HEK293 (cell line): ENCODE measurements at regions of chr11 and their contacts with region 1.

Region 1: DNA sequence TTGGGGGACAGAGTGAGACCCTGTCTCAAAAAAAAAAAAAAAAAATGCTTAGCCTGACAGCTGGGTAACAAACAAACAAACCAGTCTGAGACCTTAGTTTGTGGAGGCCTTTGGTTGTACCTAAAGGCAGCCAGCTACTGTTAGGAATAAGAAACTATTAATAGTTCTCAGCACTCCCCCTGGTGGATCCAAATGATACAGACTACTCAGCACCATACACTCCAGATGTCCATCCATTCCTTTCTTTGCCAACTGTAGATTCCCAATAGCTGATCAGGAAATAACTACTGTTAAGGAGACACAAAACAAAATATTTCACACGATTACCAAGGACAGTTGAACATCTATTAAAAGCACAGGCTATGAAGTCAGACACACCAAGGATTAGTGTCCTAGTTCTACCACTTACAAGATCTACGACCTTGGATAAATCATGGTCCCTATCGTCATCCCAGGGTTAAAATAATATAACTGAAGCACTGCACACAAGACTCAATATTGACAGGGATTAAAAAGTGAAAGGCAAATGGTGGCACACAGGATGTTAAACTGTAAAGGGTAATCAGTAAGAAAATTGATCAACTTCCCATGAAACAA is 17.2 kb downstream of the CLDN25 start:
- H3K4me3 ChIP-seq: no peak overlapping the region
- H3K27ac ChIP-seq: no peak overlapping the region
- H3K4me1 ChIP-seq: no peaks in the 10 kb centered on the region
- CTCF ChIP-seq: no peak

Region 2: DNA sequence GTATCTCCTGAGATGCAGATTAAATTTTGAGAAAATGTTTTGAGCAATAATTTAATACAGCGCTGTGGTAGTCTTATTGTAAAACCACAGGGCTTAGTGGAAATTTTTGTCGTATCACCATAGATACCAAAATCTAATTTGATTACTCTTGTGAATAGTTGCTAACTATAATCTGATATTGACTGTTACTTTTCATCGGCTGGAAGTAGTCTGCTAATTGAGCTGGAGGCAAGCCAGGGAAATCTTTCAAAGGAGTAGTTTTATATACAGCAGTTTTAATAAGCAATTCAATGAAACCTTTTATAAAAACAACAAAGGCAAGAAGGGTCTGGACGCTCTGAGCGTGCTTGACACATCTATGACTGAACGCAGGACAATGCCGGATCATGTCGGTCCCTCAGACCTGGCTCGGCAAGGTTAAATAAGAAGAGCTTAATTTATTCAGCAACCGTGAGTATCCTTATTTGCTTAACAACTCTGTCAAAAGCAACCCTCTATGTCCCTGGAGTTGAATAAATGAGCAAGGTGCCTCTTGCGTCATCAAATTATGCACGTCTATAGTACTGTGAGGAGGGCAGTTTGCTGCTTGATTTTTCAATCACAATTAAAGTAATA is 714.3 kb before region 1 on chr11:
- CTCF ChIA-PET with region 1: no interaction called
- POLR2A ChIA-PET with region 1: no interaction called
- H3K4me3 ChIP-seq: no peak overlapping the region
- H3K27ac ChIP-seq: no peak overlapping the region
- H3K4me1 ChIP-seq: peaks cover 2% of the 10 kb centered on the region; the same call in 1 of the 2 replicates
- CTCF ChIP-seq: no peak

Region 3: GRCh38 chr11:113613619-113614018 is 183.1 kb before region 1 on chr11:
- CTCF ChIA-PET with region 1: no interaction called
- POLR2A ChIA-PET with region 1: no interaction called
- H3K4me3 ChIP-seq: no peak overlapping the region
- H3K27ac ChIP-seq: no peak overlapping the region
- H3K4me1 ChIP-seq: no peaks in the 10 kb centered on the region
- CTCF ChIP-seq: no peak

Region 4: DNA sequence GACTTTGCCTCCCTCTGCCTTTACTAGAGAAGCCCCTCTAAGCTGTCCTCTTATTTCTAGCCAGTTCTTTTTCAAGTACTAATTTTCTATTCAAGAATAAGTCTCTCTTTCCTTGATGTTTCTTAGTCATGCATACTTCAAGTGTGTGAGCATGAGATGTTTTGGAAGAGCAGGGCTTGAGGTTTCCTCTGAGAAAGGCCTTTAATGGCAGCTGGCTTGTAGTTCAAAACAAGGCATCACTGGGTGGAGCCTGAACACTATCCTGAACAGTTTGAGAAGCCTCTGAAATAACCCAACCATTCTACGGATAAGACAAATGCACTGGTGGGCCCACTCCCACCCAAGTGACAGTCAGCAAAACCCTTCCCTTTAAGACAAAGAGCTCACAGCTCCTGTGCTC is 20.4 kb after region 1 on chr11:
- CTCF ChIA-PET with region 1: interaction called, 10 read pairs
- POLR2A ChIA-PET with region 1: interaction called, 3 read pairs
- H3K4me3 ChIP-seq: no peak overlapping the region
- H3K27ac ChIP-seq: no peak overlapping the region
- H3K4me1 ChIP-seq: no peaks in the 10 kb centered on the region
- CTCF ChIP-seq: no peak